ENCODE measurements at regions of chr7 and their contacts with region 1.

Region 1: GRCh38 chr7:42450239-42450638 is 213.2 kb upstream of the GLI3 start:
- DNase-seq: no peak
- H3K4me3 ChIP-seq: no peak overlapping the region
- H3K27ac ChIP-seq: no peak overlapping the region
- H3K4me1 ChIP-seq: no peaks in the 10 kb centered on the region
- H3K27me3 ChIP-seq: no peaks in the 10 kb centered on the region
- CTCF ChIP-seq: no peak
- POLR2A ChIP-seq: no peak

Region 2: DNA sequence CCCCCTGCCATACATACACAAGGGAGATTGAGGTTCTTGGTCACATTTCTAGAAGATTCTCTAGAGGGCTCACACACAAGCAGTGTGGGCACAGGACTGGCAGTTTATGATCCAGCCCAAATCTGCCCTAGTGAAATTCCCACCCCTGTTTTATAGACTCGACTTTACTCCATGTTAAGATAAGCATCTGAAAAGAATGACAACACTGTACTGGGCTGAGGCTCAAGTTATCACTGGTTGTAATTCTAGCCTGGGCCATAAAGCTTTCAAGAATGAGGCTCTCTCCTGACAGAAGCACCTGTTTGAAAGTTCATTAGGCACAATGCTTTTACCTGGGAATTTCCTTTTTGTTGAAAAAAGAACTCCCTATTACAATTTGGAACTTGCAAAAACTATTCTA is 17.6 kb before region 1 on chr7:
- intact Hi-C with region 1: loop called (anchors 1 kb)
- DNase-seq: no peak
- H3K4me3 ChIP-seq: no peak overlapping the region
- H3K27ac ChIP-seq: no peak overlapping the region
- H3K4me1 ChIP-seq: peaks cover 10% of the 10 kb centered on the region
- H3K27me3 ChIP-seq: no peaks in the 10 kb centered on the region
- CTCF ChIP-seq: no peak
- POLR2A ChIP-seq: no peak

Measured in vagina (tissue), 2 donors.